Ascending aorta (tissue), 2 donors: ENCODE measurements at regions of chr13 and their contacts with region 1.

Region 1: GRCh38 chr13:41668130-41668757 is 210.9 kb downstream of the RGCC start:
- DNase-seq: peak in 1 of 2 donors; percentile 80
- H3K4me3 ChIP-seq: no peak overlapping the region
- H3K27ac ChIP-seq: no peak overlapping the region
- H3K4me1 ChIP-seq: no peaks in the 10 kb centered on the region
- H3K27me3 ChIP-seq: no peaks in the 10 kb centered on the region
- CTCF ChIP-seq: peak; percentile 72 to 88 (median 83)

Region 2: GRCh38 chr13:41716236-41716635 is 48.0 kb after region 1 on chr13:
- intact Hi-C with region 1: loop called (anchors 2 kb)
- DNase-seq: no peak
- H3K4me3 ChIP-seq: no peak overlapping the region
- H3K27ac ChIP-seq: no peak overlapping the region
- H3K4me1 ChIP-seq: no peaks in the 10 kb centered on the region
- H3K27me3 ChIP-seq: no peaks in the 10 kb centered on the region
- CTCF ChIP-seq: no peak

Region 3: GRCh38 chr13:41827507-41828213 is 159.4 kb after region 1 on chr13:
- intact Hi-C with region 1: loop called (anchors 5 kb)
- DNase-seq: peak in 1 of 2 donors; percentile 76
- H3K4me3 ChIP-seq: no peak overlapping the region
- H3K27ac ChIP-seq: peak overlapping the region; percentile 2 to 48
- H3K4me1 ChIP-seq: peaks cover 0 to 10% of the 10 kb centered on the region in 2 donors
- H3K27me3 ChIP-seq: no peaks in the 10 kb centered on the region
- CTCF ChIP-seq: no peak

Region 4: DNA sequence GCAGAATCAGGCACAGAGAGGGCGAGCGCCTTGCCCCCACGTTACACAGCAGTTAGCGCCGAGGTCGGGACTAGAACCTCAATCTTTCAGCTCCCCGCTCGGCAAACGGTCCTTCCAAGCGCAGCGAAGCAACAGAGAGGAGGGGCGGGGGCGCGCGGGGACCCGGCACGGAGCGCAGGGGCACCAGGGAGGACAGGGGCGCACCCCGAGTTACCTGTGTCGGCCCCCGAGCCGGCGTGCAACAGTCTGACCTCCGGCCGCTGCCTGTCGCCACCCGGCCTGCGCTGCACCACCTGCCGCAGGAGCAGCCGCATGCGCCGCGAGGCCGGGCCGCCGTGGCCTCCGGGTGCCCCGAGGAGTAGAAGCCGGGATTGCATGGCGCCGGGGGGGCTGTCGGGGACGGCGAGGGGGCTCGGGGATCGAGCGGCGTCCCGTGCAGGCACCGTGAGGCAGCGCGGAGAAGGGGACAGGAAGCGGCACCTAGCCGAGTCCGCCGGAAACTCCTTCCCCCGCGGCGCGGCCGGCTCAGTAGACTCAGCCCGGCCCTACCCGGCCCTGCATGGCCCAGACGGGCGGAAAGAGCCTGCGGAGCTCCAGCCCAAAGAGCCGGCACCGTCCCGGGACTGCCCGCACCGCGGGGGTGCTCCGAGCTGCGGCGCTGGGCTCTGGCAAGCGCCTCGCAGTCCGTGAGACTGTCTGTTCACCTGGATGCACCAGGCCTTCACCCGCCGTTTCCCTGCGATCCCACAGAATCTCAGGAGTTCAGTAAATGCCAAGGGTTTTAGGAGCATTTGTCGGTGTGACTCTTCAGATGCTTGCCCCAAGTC is 292.6 kb after region 1 on chr13 and contains the start of gene VWA8:
- intact Hi-C with region 1: loop called (anchors 2 kb)
- DNase-seq: peak in 1 of 2 donors; percentile 87
- H3K4me3 ChIP-seq: peak within 1 kb of the TSS; percentile 81 to 89
- H3K27ac ChIP-seq: peak within 1 kb of the TSS; percentile 85 to 91
- H3K4me1 ChIP-seq: peaks cover 0 to 10% of the 10 kb centered on the region in 2 donors
- H3K27me3 ChIP-seq: no peaks in the 10 kb centered on the region
- CTCF ChIP-seq: no peak
- total RNA-seq, gene VWA8: 10.4 TPM

Region 5: DNA sequence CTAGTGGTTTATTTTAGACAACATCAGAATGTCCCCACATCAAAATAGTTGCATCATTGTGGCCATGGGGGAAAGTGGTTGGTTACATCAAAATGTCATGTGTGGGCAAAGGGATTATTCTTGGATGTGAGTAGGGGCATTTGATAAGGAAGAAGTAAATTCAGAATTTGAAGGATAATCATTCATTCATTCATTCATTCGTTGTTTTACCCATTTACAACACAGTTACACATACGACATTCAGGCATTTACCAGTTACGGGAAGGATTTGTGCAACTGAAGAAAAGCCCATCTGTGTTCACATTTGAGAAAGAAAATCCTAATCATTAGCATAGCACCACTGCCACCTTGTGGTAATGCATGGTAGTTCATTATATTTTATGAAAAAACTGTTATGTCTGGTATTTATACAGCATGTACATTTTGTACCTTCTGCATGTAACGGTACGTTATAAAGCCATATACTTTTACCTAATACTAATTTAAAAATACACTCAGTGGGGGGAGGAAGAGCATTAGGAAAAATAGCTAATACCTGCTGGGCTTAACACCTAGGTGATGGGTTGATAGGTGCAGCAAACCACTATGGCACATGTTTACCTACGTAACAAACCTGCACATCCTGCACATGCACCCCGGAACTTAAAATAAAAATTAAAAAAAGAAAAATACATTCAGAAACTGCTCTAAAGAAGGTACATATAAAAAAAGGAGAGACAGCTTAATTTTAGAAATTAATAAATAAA is 442.3 kb after region 1 on chr13:
- intact Hi-C with region 1: loop called (anchors 2 kb)
- DNase-seq: no peak
- H3K4me3 ChIP-seq: no peak overlapping the region
- H3K27ac ChIP-seq: no peak overlapping the region
- H3K4me1 ChIP-seq: peaks cover 0 to 6% of the 10 kb centered on the region in 2 donors
- H3K27me3 ChIP-seq: no peaks in the 10 kb centered on the region
- CTCF ChIP-seq: peak; percentile 65 to 79 (median 75)